ENCODE measurements at regions of chr6 and their contacts with region 1.

Region 1: DNA sequence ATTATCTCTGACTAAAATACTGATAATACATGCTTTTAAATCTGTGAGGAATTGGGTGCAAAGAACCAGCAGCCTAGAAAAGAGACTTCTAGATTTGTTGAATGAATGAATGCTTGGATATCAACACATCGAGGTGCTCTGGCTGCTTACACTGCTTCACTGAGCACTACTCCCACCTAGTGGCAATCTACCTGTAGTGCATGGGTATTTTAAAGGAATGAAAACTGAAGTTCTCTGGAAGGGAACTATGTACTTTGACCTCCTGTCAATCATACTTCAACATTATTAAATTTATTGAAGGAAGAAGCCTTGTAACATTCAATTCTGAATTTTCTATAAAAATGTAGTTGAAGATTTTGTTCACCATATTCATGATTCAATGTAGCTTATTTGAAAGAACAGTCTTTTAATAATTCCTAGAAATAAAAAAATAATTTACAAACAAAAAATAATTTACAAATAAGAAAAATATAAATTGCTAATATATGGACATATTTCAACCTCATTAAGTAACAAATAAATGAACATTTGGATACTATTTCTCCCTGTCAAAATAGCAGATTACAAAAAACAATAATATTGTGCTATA is 111.2 kb upstream of the MMS22L start:
- DNase-seq: peak in 8 of 9 donors; percentile 16 to 63 (median 48)
- ATAC-seq: peak; percentile 92
- H3K4me3 ChIP-seq: no peak overlapping the region
- H3K4me3 Mint-ChIP-seq: no peak overlapping the region
- H3K27ac ChIP-seq: no peak overlapping the region
- H3K27ac Mint-ChIP-seq: no peak overlapping the region
- H3K4me1 ChIP-seq: no peaks in the 10 kb centered on the region
- H3K4me1 Mint-ChIP-seq: peaks cover 0 to 2% (median 0%) of the 10 kb centered on the region in 7 donors
- H3K27me3 ChIP-seq: no peaks in the 10 kb centered on the region
- H3K27me3 Mint-ChIP-seq: peaks cover 10 to 46% (median 21%) of the 10 kb centered on the region in 5 donors

Region 2: GRCh38 chr6:96276305-96276704 is 1117.9 kb before region 1 on chr6:
- CTCF ChIA-PET with region 1: no interaction called
- POLR2A ChIA-PET with region 1: no interaction called
- intact Hi-C with region 1: no loop called
- DNase-seq: no peak
- ATAC-seq: no peak
- H3K4me3 ChIP-seq: no peak overlapping the region
- H3K4me3 Mint-ChIP-seq: no peak overlapping the region
- H3K27ac ChIP-seq: no peak overlapping the region
- H3K27ac Mint-ChIP-seq: no peak overlapping the region
- H3K4me1 ChIP-seq: no peaks in the 10 kb centered on the region
- H3K4me1 Mint-ChIP-seq: no peaks in the 10 kb centered on the region
- H3K27me3 ChIP-seq: no peaks in the 10 kb centered on the region
- H3K27me3 Mint-ChIP-seq: peaks cover 0 to 9% (median 4%) of the 10 kb centered on the region in 5 donors

Region 3: GRCh38 chr6:96542702-96543101 is 851.6 kb before region 1 on chr6:
- CTCF ChIA-PET with region 1: no interaction called
- POLR2A ChIA-PET with region 1: no interaction called
- intact Hi-C with region 1: loop called in 1 of 2 experiments (anchors 2 kb)
- DNase-seq: peak in 5 of 9 donors; percentile 6 to 31 (median 11)
- ATAC-seq: no peak
- H3K4me3 ChIP-seq: no peak overlapping the region
- H3K4me3 Mint-ChIP-seq: no peak overlapping the region
- H3K27ac ChIP-seq: no peak overlapping the region
- H3K27ac Mint-ChIP-seq: peak overlapping the region in 1 of 9 donors; percentile 20
- H3K4me1 ChIP-seq: no peaks in the 10 kb centered on the region
- H3K4me1 Mint-ChIP-seq: peaks cover 0 to 4% (median 0%) of the 10 kb centered on the region in 7 donors
- H3K27me3 ChIP-seq: no peaks in the 10 kb centered on the region
- H3K27me3 Mint-ChIP-seq: no peaks in the 10 kb centered on the region

Region 4: DNA sequence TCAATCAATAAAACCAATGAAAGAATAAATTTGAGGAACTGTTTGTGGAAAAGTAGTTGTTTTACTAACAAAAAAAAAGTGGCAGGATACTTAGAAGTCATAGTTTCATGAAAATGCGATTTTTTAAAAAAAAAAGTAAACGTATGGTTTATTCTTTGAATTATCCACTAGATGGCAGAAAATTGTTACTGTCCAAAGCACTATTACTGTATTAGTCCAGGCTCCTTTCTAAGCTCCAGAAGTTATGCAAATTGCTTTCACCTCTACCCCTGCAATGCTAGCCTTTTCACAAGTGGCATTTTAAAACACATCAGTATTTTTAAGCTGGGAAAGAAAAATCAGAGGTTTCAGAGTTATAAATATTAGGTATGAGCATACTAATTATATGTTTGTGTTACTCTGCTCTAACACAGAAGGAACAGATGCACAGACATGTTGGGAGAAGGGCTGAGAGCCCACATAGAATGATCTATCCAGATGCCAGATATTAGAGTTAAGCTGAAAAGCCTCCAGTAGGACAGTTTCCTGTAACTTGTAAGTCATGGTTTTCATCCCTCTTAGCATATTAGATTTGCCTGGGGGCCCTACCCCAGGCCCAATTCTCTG is 767.4 kb before region 1 on chr6:
- CTCF ChIA-PET with region 1: no interaction called
- POLR2A ChIA-PET with region 1: no interaction called
- intact Hi-C with region 1: loop called (anchors 1 to 5 kb)
- DNase-seq: peak in 5 of 9 donors; percentile 7 to 33 (median 13)
- ATAC-seq: peak; percentile 46
- H3K4me3 ChIP-seq: no peak overlapping the region
- H3K4me3 Mint-ChIP-seq: no peak overlapping the region
- H3K27ac ChIP-seq: no peak overlapping the region
- H3K27ac Mint-ChIP-seq: no peak overlapping the region
- H3K4me1 ChIP-seq: no peaks in the 10 kb centered on the region
- H3K4me1 Mint-ChIP-seq: peaks cover 0 to 3% (median 0%) of the 10 kb centered on the region in 7 donors
- H3K27me3 ChIP-seq: no peaks in the 10 kb centered on the region
- H3K27me3 Mint-ChIP-seq: peaks cover 5 to 23% (median 14%) of the 10 kb centered on the region in 5 donors

Region 5: GRCh38 chr6:97068211-97068610 is 326.0 kb before region 1 on chr6:
- CTCF ChIA-PET with region 1: no interaction called
- POLR2A ChIA-PET with region 1: no interaction called
- intact Hi-C with region 1: loop called (anchors 1 kb)
- DNase-seq: peak in 2 of 9 donors; percentile 8
- ATAC-seq: no peak
- H3K4me3 ChIP-seq: no peak overlapping the region
- H3K4me3 Mint-ChIP-seq: no peak overlapping the region
- H3K27ac ChIP-seq: no peak overlapping the region
- H3K27ac Mint-ChIP-seq: no peak overlapping the region
- H3K4me1 ChIP-seq: no peaks in the 10 kb centered on the region
- H3K4me1 Mint-ChIP-seq: no peaks in the 10 kb centered on the region
- H3K27me3 ChIP-seq: no peaks in the 10 kb centered on the region
- H3K27me3 Mint-ChIP-seq: no peaks in the 10 kb centered on the region

Region 6: GRCh38 chr6:97186416-97186999 is 207.7 kb before region 1 on chr6:
- CTCF ChIA-PET with region 1: interaction called, 29 read pairs
- POLR2A ChIA-PET with region 1: no interaction called
- intact Hi-C with region 1: loop called (anchors 1 kb)
- DNase-seq: peak; percentile 16 to 61 (median 48)
- ATAC-seq: peak; percentile 78
- H3K4me3 ChIP-seq: no peak overlapping the region
- H3K4me3 Mint-ChIP-seq: no peak overlapping the region
- H3K27ac ChIP-seq: no peak overlapping the region
- H3K27ac Mint-ChIP-seq: no peak overlapping the region
- H3K4me1 ChIP-seq: no peaks in the 10 kb centered on the region
- H3K4me1 Mint-ChIP-seq: peaks cover 0 to 3% (median 0%) of the 10 kb centered on the region in 7 donors
- H3K27me3 ChIP-seq: no peaks in the 10 kb centered on the region
- H3K27me3 Mint-ChIP-seq: no peaks in the 10 kb centered on the region

Region 7: GRCh38 chr6:97215157-97215769 is 179.0 kb before region 1 on chr6:
- CTCF ChIA-PET with region 1: no interaction called
- POLR2A ChIA-PET with region 1: no interaction called
- intact Hi-C with region 1: loop called in 1 of 2 experiments (anchors 1 kb)
- DNase-seq: peak in 1 of 9 donors; percentile 0
- ATAC-seq: no peak
- H3K4me3 ChIP-seq: no peak overlapping the region
- H3K4me3 Mint-ChIP-seq: no peak overlapping the region
- H3K27ac ChIP-seq: no peak overlapping the region
- H3K27ac Mint-ChIP-seq: no peak overlapping the region
- H3K4me1 ChIP-seq: no peaks in the 10 kb centered on the region
- H3K4me1 Mint-ChIP-seq: peaks cover 0 to 12% (median 0%) of the 10 kb centered on the region in 7 donors
- H3K27me3 ChIP-seq: no peaks in the 10 kb centered on the region
- H3K27me3 Mint-ChIP-seq: no peaks in the 10 kb centered on the region

Region 8: GRCh38 chr6:99119109-99120031 is 1725.1 kb after region 1 on chr6:
- CTCF ChIA-PET with region 1: interaction called, 3 read pairs
- POLR2A ChIA-PET with region 1: no interaction called
- intact Hi-C with region 1: loop called in 1 of 2 experiments (anchors 5 kb)
- DNase-seq: peak in 5 of 9 donors; percentile 21 to 39 (median 30)
- ATAC-seq: no peak
- H3K4me3 ChIP-seq: no peak overlapping the region
- H3K4me3 Mint-ChIP-seq: no peak overlapping the region
- H3K27ac ChIP-seq: no peak overlapping the region
- H3K27ac Mint-ChIP-seq: no peak overlapping the region
- H3K4me1 ChIP-seq: no peaks in the 10 kb centered on the region
- H3K4me1 Mint-ChIP-seq: no peaks in the 10 kb centered on the region
- H3K27me3 ChIP-seq: peaks cover 0 to 4% of the 10 kb centered on the region in 2 donors
- H3K27me3 Mint-ChIP-seq: peaks cover 18 to 47% (median 25%) of the 10 kb centered on the region in 5 donors

Measured in naive thymus-derived CD4-positive, alpha-beta T cell (primary cell).